ENCODE measurements at regions of chr7 and their contacts with region 1.

Region 1: DNA sequence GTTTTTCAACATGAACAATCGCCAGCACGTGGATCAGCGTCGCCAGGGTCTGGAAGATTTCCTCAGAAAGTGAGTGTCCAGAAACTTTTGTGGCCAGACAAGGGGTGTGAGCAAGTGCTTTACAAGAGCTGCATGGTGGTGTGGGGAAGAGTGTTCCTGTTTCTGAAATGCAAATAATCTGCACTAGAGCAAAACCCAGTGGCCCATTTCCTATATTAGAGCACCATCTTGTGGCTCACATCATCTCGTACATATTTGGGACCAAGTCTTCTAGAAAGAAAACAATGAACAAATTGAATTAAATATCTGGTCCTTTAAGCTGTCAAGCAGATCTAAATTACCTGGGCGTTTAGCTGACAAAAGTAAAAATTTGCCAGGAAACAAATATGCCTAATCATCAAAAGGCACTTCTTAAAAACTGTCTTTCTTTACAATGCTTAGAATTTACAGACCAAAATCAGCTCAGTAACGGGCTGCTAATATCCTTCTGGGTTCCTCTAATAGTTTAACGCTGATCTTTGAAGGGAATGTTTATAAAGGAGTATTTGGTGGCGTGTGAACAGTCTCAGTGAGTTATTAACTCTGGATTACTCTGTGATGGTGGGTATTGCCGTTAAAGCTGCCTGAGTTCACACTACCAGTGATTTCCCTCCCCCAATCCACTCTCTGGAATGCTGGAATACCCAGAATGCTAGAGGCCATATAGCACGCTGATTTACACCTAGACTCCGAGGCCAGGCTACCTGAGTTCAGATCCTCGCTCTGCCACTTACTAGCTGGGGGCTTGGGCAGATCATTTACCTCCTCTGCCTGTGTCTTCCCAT is 73.6 kb downstream of the SNX10 start:
- DNase-seq: peak; percentile 54
- CTCF ChIP-seq: peak; percentile 74

Region 2: DNA sequence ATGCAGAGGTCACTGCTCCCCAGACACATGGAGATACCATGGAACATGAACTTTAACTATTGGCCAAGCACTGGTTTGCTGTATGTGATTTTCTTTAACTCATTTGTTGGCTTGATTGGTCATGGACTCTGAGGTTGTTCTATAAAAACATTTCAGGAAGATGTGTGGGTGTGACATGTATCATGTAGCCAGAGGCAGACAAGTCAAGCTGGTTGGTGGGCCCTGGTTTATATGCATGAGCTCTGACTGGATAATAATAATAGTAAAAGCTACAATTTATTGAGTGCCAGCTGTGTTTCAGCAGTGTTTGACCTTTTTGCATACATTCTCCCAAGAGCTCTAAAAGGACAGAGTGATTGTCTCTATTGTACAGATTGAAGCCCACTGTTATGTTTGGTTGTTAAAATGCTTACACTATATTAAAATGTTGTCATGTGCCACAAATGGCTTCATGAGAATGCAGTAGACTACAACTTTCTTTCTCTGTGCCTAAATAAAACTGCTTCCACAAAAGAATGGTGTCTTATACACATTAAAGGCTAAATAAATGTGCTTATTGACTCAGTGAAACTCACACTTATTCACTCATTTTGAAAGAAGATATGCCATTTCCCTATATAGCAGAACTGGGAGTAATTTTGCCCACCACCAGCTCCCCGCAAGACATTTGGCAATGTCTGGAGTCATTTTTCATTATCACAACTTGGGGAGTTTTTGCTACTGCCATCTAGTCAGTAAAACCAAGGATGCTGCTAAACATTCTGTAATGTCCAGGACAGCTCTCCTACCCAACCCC is 456.9 kb before region 1 on chr7:
- CTCF ChIA-PET with region 1: interaction called, 10 read pairs
- POLR2A ChIA-PET with region 1: no interaction called
- DNase-seq: no peak
- CTCF ChIP-seq: no peak

Region 3: GRCh38 chr7:26200444-26201246 is 164.6 kb before region 1 on chr7 and contains the start of gene HNRNPA2B1:
- CTCF ChIA-PET with region 1: interaction called, 13 read pairs
- POLR2A ChIA-PET with region 1: no interaction called
- DNase-seq: peak; percentile 80
- CTCF ChIP-seq: no peak

Region 4: DNA sequence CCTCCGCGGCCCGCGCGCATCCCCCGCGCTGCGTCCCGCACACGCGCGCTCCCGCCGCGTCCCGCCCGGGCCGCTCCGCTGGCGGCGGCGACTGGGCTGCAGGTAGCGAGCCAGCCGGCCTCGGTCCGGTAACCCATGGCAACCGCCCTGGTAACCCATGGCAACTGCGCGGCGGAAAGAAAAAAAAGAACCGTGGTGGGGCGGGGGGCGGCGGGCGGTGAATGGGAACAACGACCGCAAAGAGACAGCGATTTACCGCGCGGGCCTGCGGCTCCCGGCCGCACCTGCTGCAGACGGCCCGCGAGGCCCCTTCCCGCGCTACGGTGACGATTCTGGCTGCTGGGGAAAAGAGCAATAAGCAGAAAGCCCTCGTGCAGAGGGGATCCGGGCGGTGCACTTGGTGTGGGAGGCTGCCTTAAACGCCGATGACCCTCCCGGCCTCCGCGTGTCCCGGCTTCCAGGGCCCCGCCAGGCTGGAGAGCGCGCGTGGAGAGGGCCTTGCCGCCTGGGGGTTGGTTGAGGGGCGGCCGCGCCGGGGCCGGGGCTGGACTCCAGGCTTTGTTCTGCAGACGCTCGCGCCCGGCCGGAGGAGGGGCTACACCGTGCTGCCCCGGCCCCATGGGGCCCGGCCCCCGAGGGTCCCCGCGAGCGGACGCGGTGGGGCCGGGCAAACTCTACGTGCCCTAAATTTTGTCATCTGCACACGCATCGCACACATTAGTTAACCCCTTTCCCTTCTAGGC is 11.1 kb after region 1 on chr7:
- CTCF ChIA-PET with region 1: interaction called, 19 read pairs
- POLR2A ChIA-PET with region 1: no interaction called
- DNase-seq: peak; percentile 36
- CTCF ChIP-seq: no peak

Region 5: GRCh38 chr7:26477381-26477990 is 112.2 kb after region 1 on chr7:
- CTCF ChIA-PET with region 1: no interaction called
- POLR2A ChIA-PET with region 1: no interaction called
- DNase-seq: no peak
- CTCF ChIP-seq: no peak

Region 6: DNA sequence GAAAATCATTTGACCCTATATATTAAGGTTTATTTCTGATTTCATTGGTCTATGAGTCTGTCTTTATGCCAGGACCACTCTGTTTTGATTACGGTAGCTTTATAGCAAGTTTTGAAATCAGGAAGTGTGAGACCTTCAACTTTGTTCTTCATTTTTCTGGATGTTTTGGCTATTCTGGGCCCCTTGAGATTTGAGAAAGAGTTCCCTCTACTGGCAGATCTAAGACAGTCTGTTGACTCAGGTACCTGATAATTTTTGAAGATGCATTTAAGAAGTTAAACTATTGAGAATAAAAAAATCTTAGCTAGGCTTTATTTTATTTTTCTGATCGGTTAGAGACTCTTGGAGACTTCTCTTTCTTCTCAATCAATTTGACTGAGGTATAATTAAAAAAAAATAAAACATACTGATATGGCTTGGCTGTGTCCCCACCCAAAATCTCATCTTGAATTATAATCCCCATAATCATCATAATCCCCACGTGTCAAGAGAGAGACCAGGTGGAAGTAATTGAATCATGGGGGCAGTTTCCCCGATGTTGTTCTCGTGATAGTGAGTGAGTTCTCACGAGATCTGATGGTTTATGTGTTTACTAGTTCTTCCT is 135.6 kb after region 1 on chr7:
- CTCF ChIA-PET with region 1: interaction called, 38 read pairs
- POLR2A ChIA-PET with region 1: no interaction called
- DNase-seq: peak; percentile 59
- CTCF ChIP-seq: peak; percentile 50

Region 7: GRCh38 chr7:27160546-27161213 is 795.4 kb after region 1 on chr7:
- CTCF ChIA-PET with region 1: interaction called, 52 read pairs
- POLR2A ChIA-PET with region 1: no interaction called
- DNase-seq: peak; percentile 87
- CTCF ChIP-seq: peak; percentile 97

Measured in GM10248 (cell line).